Left lung (tissue), 14 donors: ENCODE measurements at regions of chr3 and their contacts with region 1.

Region 1: GRCh38 chr3:43178891-43179366 is 73.0 kb upstream of the POMGNT2 start:
- DNase-seq: no peak
- ATAC-seq: peak; percentile 61
- H3K4me3 ChIP-seq: no peak overlapping the region
- H3K27ac ChIP-seq: peak overlapping the region in 1 of 2 donors; percentile 69
- H3K4me1 ChIP-seq: peaks cover 16 to 49% of the 10 kb centered on the region in 2 donors
- H3K27me3 ChIP-seq: no peaks in the 10 kb centered on the region
- CTCF ChIP-seq: no peak

Region 2: DNA sequence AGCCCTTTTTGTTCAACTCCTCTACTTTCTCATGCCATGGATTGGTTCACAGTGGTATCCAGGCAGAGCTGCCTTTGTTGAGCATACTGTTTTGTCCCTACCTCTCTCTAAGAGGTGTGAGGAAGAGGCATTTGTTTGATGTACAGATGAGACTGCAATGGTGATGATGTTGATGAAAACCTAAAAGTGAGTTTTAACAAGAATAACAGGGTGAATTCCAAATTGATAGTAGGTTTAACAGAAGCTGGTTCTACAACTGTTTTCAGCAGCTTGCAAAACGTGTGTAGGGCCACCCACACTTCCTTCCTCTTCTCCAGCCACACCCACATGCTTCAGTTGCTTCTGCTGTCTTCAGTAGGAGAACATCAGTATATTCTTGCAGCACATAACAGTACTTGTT is 117.6 kb after region 1 on chr3:
- intact Hi-C with region 1: loop called in 1 of 2 experiments (anchors 10 kb)
- DNase-seq: peak in 1 of 4 donors; percentile 60
- ATAC-seq: peak; percentile 76
- H3K4me3 ChIP-seq: no peak overlapping the region
- H3K27ac ChIP-seq: peak overlapping the region in 1 of 2 donors; percentile 66
- H3K4me1 ChIP-seq: peaks cover 14 to 98% of the 10 kb centered on the region in 2 donors
- H3K27me3 ChIP-seq: no peaks in the 10 kb centered on the region
- CTCF ChIP-seq: no peak